ENCODE measurements at regions of chr11 and their contacts with region 1.

Region 1: DNA sequence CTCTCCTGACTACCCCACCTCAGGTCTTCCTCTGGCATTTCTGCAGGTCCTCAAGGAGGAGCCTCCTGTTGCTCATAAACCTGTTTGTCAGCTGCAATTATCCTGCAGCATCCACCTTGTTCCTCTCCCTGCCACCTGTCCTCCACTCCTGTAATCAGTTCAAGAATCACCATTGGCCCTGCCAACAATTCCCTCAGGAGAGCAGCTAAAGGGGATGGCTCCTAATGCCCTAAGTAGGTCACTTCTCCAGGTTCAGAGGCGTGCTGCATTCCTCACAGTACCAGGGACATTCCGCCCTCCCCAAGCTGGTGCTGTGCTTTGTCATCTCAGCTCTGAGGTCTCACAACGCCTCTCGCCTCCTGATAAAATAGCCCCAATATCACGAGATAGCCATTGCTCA is 2.1 kb downstream of the CLDN25 start:
- DNase-seq: no peak
- H3K4me3 Mint-ChIP-seq: no peak overlapping the region
- H3K27ac Mint-ChIP-seq: no peak overlapping the region
- H3K4me1 Mint-ChIP-seq: no peaks in the 10 kb centered on the region
- H3K27me3 Mint-ChIP-seq: peaks cover 30% of the 10 kb centered on the region

Region 2: DNA sequence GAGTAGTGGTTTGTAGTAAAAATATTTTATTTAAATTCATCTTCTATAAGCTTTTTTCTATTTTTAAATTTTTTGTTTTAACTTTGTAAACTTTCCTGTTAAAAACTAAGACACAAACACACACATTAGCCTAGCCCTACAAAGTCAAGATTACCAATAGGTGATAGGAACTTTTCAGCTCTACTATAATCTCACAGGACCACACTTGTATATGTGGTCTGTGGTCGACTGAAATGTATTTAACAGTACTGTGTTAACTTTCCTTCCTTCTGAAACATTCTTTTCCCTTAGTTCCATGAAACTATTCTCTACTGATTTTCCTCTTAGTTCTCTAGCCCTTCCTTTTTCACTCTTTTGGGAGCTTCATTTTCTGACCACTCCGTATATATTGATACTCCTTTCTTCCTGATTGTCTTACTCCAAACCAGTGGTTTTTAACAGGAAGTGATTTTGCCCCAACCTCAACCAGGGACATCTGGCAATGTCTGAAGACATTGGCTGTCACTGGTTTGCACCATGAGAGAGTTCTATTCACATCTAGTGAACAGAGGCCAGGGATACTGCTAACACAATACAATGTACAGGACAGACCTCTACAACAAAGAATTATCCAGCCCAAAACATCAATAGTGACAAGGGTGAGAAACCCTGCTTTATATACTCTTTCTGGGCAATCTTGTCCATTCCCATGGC is 17.0 kb before region 1 on chr11:
- CTCF ChIA-PET with region 1: no interaction called
- POLR2A ChIA-PET with region 1: no interaction called
- DNase-seq: no peak
- H3K4me3 Mint-ChIP-seq: no peak overlapping the region
- H3K27ac Mint-ChIP-seq: no peak overlapping the region
- H3K4me1 Mint-ChIP-seq: peaks cover 33% of the 10 kb centered on the region
- H3K27me3 Mint-ChIP-seq: no peaks in the 10 kb centered on the region

Region 3: GRCh38 chr11:113796663-113797259 is 15.1 kb after region 1 on chr11:
- CTCF ChIA-PET with region 1: interaction called, 10 read pairs
- POLR2A ChIA-PET with region 1: no interaction called
- DNase-seq: no peak
- H3K4me3 Mint-ChIP-seq: no peak overlapping the region
- H3K27ac Mint-ChIP-seq: no peak overlapping the region
- H3K4me1 Mint-ChIP-seq: no peaks in the 10 kb centered on the region
- H3K27me3 Mint-ChIP-seq: no peaks in the 10 kb centered on the region